Caco-2 (cell line): ENCODE measurements at regions of chr5 and their contacts with region 1.

Region 1: GRCh38 chr5:60597572-60598320 is 102.2 kb downstream of the DEPDC1B start:
- DNase-seq: no peak
- H3K4me3 ChIP-seq: no peak overlapping the region
- H3K4me3 Mint-ChIP-seq: no peak overlapping the region
- H3K27ac Mint-ChIP-seq: no peak overlapping the region
- H3K4me1 ChIP-seq: no peaks in the 10 kb centered on the region
- H3K4me1 Mint-ChIP-seq: no peaks in the 10 kb centered on the region
- H3K27me3 ChIP-seq: no peaks in the 10 kb centered on the region
- H3K27me3 Mint-ChIP-seq: no peaks in the 10 kb centered on the region
- CTCF ChIP-seq: no peak

Region 2: GRCh38 chr5:60586307-60586901 is 11.3 kb before region 1 on chr5:
- CTCF ChIA-PET with region 1: no interaction called
- POLR2A ChIA-PET with region 1: no interaction called
- intact Hi-C with region 1: no loop called
- DNase-seq: no peak
- H3K4me3 ChIP-seq: no peak overlapping the region
- H3K4me3 Mint-ChIP-seq: no peak overlapping the region
- H3K27ac Mint-ChIP-seq: no peak overlapping the region
- H3K4me1 ChIP-seq: no peaks in the 10 kb centered on the region
- H3K4me1 Mint-ChIP-seq: no peaks in the 10 kb centered on the region
- H3K27me3 ChIP-seq: no peaks in the 10 kb centered on the region
- H3K27me3 Mint-ChIP-seq: no peaks in the 10 kb centered on the region
- CTCF ChIP-seq: peak; percentile 27 to 54

Region 3: GRCh38 chr5:60649283-60649917 is 51.7 kb after region 1 on chr5:
- CTCF ChIA-PET with region 1: no interaction called
- POLR2A ChIA-PET with region 1: no interaction called
- intact Hi-C with region 1: loop called (anchors 5 kb)
- DNase-seq: peak in 1 of 2 experiments; percentile 48
- H3K4me3 ChIP-seq: no peak overlapping the region
- H3K4me3 Mint-ChIP-seq: no peak overlapping the region
- H3K27ac Mint-ChIP-seq: no peak overlapping the region
- H3K4me1 ChIP-seq: 0 out of 2 replicates have a peak, but pooled peaks cover 5% of the 10 kb centered on the region
- H3K4me1 Mint-ChIP-seq: peaks cover 15% of the 10 kb centered on the region
- H3K27me3 ChIP-seq: no peaks in the 10 kb centered on the region
- H3K27me3 Mint-ChIP-seq: no peaks in the 10 kb centered on the region
- CTCF ChIP-seq: peak; percentile 71 to 79